Common myeloid progenitor, CD34-positive (primary cell): ENCODE measurements at regions of chr2 and their contacts with region 1.

Region 1: GRCh38 chr2:119174216-119175037 is 15.9 kb upstream of the C1QL2 start:
- DNase-seq: peak; percentile 45 to 72 (median 60)
- H3K4me3 ChIP-seq: no peak overlapping the region
- H3K27ac ChIP-seq: no peak overlapping the region
- H3K4me1 ChIP-seq: no peaks in the 10 kb centered on the region
- H3K27me3 ChIP-seq: peaks cover 0 to 6% (median 0%) of the 10 kb centered on the region in 5 experiments

Region 2: GRCh38 chr2:118847497-118848172 is 326.8 kb before region 1 on chr2 and contains the start of gene EN1:
- CTCF ChIA-PET with region 1: no interaction called
- POLR2A ChIA-PET with region 1: no interaction called
- DNase-seq: peak in 2 of 3 donors; percentile 50 to 60
- H3K4me3 ChIP-seq: peak within 1 kb of the TSS in 1 of 7 experiments; percentile 28
- H3K27ac ChIP-seq: no peak within 1 kb of the TSS
- H3K4me1 ChIP-seq: peaks cover 0 to 17% (median 2%) of the 10 kb centered on the region in 4 experiments
- H3K27me3 ChIP-seq: peaks cover 11 to 97% (median 73%) of the 10 kb centered on the region in 5 experiments

Region 3: GRCh38 chr2:119076713-119077112 is 97.7 kb before region 1 on chr2:
- CTCF ChIA-PET with region 1: no interaction called
- POLR2A ChIA-PET with region 1: no interaction called
- DNase-seq: no peak
- H3K4me3 ChIP-seq: no peak overlapping the region
- H3K27ac ChIP-seq: no peak overlapping the region
- H3K4me1 ChIP-seq: no peaks in the 10 kb centered on the region
- H3K27me3 ChIP-seq: peaks cover 0 to 11% (median 5%) of the 10 kb centered on the region in 5 experiments

Region 4: DNA sequence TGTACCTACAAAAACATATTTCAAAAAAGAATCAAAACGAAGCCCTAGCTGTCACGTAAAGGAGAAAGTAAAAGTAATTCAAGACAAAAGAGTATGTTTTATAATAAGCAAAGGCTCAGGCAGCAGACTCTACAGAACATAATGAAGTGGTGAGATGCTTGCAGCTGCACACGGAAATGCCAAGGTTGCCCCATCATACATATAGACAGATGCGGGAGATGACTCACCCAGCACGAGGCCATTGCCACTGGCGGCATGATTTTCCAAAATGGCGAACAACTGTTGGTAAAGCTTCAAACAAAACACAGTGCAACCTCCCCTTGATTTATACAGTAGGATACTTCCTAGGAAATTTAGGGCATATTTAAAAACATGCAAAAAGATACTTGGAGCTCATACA is 10.1 kb after region 1 on chr2:
- CTCF ChIA-PET with region 1: interaction called, 13 read pairs
- POLR2A ChIA-PET with region 1: no interaction called
- DNase-seq: no peak
- H3K4me3 ChIP-seq: no peak overlapping the region
- H3K27ac ChIP-seq: no peak overlapping the region
- H3K4me1 ChIP-seq: no peaks in the 10 kb centered on the region
- H3K27me3 ChIP-seq: peaks cover 0 to 2% (median 0%) of the 10 kb centered on the region in 5 experiments

Region 5: GRCh38 chr2:119338826-119339561 is 164.6 kb after region 1 on chr2:
- CTCF ChIA-PET with region 1: no interaction called
- POLR2A ChIA-PET with region 1: no interaction called
- DNase-seq: peak; percentile 86 to 98 (median 95)
- H3K4me3 ChIP-seq: peak overlapping the region in 3 of 7 experiments; percentile 7 to 33 (median 10)
- H3K27ac ChIP-seq: peak overlapping the region in 1 of 2 experiments; percentile 29
- H3K4me1 ChIP-seq: peaks cover 15 to 28% (median 20%) of the 10 kb centered on the region in 4 experiments
- H3K27me3 ChIP-seq: no peaks in the 10 kb centered on the region